Activated CD4-positive, alpha-beta T cell treated with anti-CD3 and anti-CD28 coated beads, Interleukin-2, amount 10 ng/mL, durations not matched to agents 24 days and 14 days (primary cell): ENCODE measurements at regions of chr6 and their contacts with region 1.

Region 1: DNA sequence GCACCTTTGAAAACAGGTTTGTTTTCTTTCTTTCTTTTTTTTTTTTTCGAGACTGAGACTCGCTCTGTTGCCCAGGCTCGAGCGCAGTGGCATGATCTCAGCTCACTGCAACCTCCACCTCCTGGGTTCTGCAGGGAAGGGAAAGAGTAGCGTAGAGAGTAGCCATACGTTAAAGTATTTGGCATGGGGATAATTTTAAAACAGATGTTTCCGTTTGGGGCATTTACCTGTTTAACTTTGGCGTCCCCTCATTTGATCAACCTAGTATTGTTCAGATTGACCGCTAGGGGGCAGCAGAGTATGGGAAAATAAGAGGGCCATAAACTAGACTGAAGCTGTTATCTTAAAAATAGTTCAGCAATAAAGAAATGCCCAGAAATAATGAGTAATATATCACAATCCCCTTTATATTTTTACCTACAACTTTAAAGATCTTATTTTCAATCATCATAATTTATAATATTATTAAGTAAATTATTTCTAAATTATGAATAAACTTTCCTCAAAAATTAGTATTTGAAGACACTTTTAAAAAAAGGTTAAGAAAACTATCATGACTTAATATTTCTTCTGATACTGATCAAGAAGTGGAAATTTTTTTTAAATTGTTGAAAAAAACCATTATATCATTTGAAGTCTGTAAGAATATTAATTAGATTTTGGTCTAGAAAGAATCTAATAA is 7.6 kb upstream of the TAAR9 start:
- DNase-seq: peak; percentile 90
- H3K4me3 Mint-ChIP-seq: no peak overlapping the region
- H3K27ac Mint-ChIP-seq: no peak overlapping the region
- H3K4me1 Mint-ChIP-seq: no peaks in the 10 kb centered on the region
- H3K27me3 Mint-ChIP-seq: peaks cover 23% of the 10 kb centered on the region

Region 2: DNA sequence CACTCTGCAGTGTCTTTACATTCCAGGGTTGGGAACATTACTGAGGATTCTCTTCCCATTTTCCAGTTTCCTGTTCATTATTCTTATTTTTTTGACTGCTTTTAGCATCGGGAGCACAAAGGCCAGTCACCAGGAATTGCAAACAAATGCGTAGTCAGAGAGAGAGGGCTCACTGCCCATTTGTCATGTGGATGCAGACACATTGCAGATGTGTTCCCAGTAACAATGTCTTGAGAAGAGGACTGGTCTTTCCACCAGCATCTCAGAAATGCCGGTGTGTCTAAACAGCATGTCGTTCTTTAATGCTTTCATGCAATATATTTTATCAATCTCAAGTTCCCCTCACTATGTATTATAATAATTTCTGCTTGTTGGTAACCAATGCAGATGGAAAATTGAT is 38.7 kb after region 1 on chr6:
- intact Hi-C with region 1: no loop called
- DNase-seq: no peak
- H3K4me3 Mint-ChIP-seq: no peak overlapping the region
- H3K27ac Mint-ChIP-seq: no peak overlapping the region
- H3K4me1 Mint-ChIP-seq: no peaks in the 10 kb centered on the region
- H3K27me3 Mint-ChIP-seq: peaks cover 14% of the 10 kb centered on the region

Region 3: GRCh38 chr6:132798869-132799538 is 268.6 kb after region 1 on chr6:
- intact Hi-C with region 1: loop called (anchors 1 kb)
- DNase-seq: peak; percentile 88
- H3K4me3 Mint-ChIP-seq: peak overlapping the region; percentile 92
- H3K27ac Mint-ChIP-seq: no peak overlapping the region
- H3K4me1 Mint-ChIP-seq: peaks cover 7% of the 10 kb centered on the region
- H3K27me3 Mint-ChIP-seq: peaks cover 5% of the 10 kb centered on the region